ENCODE measurements at regions of chr20 and their contacts with region 1.

Region 1: DNA sequence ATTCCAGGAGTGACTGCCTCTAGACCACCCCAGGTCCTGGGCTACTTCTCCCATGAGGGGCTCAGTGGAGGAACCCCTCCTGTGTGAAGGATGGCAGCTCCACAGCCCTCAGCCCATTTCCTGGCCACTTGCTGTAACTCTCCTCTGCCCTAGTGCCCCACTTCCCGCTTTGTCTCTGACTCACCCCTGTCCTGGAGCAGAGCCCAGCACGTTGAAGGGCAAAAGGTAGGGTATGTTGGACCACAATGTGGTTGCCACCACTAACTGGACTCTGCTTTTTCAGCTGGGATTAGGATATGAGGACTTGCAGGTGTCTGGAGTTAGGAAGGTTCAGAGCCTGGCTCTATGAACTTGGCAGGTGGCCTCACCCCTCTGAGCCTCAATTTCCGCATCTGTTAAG is 2.4 kb downstream of the MYBL2 start:
- DNase-seq: peak; percentile 31
- H3K27ac ChIP-seq: peak overlapping the region; percentile 57
- CTCF ChIP-seq: no peak

Region 2: DNA sequence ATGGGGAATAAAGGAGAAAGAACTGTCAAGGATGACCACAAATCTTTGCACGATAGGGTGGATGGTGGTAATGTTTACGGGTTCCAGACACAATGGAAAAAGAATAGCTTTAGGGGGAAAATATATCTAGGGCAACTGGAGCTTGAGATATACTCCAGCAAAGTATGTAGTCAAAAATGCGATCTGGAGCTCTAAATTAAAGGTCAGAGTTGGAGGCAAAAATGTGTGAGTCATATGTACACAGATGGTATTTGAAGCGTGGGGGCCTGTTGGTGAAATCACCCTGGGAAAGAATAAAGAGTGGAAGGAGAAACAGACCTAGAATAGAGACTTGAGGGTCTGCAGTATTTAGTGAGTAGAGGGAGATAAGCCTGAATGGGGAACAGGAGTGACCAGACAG is 1417.2 kb before region 1 on chr20:
- CTCF ChIA-PET with region 1: interaction called, 10 read pairs
- POLR2A ChIA-PET with region 1: no interaction called
- DNase-seq: no peak
- H3K27ac ChIP-seq: no peak overlapping the region
- CTCF ChIP-seq: no peak

Region 3: GRCh38 chr20:43397147-43397546 is 272.2 kb before region 1 on chr20:
- CTCF ChIA-PET with region 1: no interaction called
- POLR2A ChIA-PET with region 1: no interaction called
- DNase-seq: no peak
- H3K27ac ChIP-seq: no peak overlapping the region
- CTCF ChIP-seq: no peak

Region 4: DNA sequence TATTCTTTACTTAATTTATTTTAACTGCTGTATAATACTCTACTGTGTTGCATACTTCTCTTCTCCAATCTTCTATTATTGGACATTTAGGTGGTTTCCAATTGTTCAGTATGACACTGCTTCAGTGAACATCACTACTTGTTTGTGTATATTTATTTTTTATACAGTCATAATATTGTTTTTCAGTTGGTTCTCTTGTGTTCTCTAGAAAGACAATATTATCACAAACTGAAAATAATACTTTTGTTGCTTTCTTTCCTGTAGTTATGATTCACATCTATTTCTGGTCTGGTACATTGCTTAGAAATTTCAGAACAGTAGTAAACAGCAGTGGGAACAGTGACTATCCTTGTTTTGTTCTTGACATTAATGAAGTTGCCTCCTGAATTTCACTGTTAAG is 120.3 kb after region 1 on chr20:
- CTCF ChIA-PET with region 1: no interaction called
- POLR2A ChIA-PET with region 1: no interaction called
- DNase-seq: no peak
- H3K27ac ChIP-seq: no peak overlapping the region
- CTCF ChIP-seq: no peak

Region 5: DNA sequence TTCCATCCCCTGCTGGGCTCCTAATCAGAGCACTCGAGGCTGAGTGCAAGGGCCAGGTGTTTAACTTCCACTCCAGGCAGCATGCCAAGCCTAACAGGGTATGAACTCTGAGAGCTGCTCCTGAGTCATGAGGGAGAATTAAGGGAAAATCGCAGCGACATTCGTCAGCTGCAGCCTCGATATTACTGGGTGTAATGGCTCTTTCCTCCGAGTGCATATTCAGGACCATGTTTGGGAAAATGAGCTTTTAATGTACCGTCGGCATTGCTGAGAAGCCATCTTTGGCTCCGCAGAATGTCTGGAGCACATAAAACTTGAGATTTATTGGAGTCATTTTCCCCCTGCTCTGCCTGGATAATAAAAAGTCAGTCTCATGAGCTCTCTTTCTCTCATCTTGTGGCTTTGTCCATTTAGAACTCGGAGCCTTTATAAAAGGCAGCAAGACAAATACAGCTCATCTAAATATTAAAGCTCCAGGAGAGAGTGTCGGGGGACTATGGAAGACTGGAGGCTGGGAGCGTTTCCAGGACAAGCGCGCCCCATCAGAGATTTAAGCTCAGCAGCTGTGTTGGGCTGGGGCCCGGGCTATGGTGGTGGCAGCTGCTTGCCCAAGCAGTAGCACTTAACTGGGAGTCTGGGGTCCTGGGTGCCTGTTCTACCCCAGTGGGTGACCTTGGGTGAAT is 349.1 kb after region 1 on chr20:
- CTCF ChIA-PET with region 1: no interaction called
- POLR2A ChIA-PET with region 1: no interaction called
- DNase-seq: peak; percentile 92
- H3K27ac ChIP-seq: peak overlapping the region; percentile 40
- CTCF ChIP-seq: no peak

Measured in RWPE1 (cell line).